Right ventricle myocardium inferior (tissue), 1 donor: ENCODE measurements at regions of chr11 and their contacts with region 1.

Region 1: DNA sequence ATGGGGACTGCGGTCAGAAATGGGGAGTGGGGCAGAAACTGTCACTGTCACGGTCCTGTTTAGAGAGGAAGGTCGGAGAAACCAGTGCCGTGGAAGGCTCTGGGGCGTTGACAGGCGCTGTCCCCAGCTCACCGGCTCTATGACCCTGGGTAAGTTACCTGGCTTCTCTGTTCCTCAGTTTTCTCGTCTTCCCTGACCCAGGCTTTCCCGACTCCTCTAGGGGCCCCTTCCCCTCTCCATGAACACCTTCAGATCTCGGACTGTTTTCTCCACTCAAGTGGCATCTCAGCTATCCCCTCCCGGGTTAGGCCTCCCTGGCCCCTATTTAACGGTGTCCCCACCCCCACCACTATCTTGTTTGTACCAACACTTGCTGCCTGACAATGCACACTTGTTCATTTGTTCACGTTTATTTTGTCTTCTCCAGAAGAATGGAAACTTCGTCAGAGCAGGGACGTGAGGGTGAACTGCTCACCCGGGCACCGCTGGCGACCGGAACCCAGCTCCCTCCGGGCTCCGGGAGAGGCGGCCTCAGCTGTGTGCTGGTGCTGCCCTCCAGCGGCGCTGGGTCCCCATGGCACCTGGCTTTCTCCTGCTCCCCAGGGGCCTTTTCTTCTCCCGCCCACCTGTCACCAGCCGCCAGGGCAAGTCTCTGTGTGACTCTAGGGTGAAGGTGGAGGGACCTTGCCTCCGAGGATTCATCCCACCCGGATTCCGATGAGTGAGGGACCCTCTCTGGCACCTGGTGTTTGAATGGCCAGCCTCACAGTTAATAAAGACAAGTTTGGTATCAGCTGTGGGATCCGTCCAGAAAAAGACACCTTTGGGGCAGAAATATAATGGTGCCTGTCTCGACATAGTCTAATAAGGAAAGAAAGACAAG is 33.1 kb upstream of the SLC35C1 start:
- DNase-seq: peak; percentile 91
- ATAC-seq: peak; percentile 96

Region 2: GRCh38 chr11:45110562-45110961 is 661.2 kb before region 1 on chr11:
- intact Hi-C with region 1: loop called (anchors 10 kb)
- DNase-seq: no peak
- ATAC-seq: peak; percentile 58

Region 3: GRCh38 chr11:45371251-45372115 is 400.3 kb before region 1 on chr11:
- intact Hi-C with region 1: loop called (anchors 1 kb)
- DNase-seq: no peak
- ATAC-seq: no peak

Region 4: GRCh38 chr11:45538363-45538762 is 233.4 kb before region 1 on chr11:
- intact Hi-C with region 1: loop called (anchors 5 kb)
- DNase-seq: no peak
- ATAC-seq: peak; percentile 88

Region 5: DNA sequence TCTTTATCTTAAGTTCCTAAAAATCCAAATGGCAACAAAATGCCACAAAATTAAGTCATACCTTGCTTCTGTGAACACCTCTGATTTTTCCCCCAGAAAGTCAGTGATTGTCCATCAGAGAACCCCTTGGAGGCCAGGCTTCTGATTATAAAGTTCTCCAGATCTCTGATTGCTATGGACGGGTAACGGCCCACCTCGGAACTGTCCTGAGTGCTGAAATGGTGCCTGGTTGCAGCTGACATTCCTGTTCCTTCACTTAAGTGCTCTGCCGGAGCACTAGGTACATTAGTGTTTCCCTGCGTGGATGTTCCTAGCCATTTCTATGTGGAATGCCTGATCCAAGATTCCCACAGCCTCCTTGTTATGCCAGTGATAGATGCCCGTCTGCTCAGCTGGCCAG is 191.4 kb before region 1 on chr11:
- intact Hi-C with region 1: no loop called
- DNase-seq: no peak
- ATAC-seq: no peak

Region 6: DNA sequence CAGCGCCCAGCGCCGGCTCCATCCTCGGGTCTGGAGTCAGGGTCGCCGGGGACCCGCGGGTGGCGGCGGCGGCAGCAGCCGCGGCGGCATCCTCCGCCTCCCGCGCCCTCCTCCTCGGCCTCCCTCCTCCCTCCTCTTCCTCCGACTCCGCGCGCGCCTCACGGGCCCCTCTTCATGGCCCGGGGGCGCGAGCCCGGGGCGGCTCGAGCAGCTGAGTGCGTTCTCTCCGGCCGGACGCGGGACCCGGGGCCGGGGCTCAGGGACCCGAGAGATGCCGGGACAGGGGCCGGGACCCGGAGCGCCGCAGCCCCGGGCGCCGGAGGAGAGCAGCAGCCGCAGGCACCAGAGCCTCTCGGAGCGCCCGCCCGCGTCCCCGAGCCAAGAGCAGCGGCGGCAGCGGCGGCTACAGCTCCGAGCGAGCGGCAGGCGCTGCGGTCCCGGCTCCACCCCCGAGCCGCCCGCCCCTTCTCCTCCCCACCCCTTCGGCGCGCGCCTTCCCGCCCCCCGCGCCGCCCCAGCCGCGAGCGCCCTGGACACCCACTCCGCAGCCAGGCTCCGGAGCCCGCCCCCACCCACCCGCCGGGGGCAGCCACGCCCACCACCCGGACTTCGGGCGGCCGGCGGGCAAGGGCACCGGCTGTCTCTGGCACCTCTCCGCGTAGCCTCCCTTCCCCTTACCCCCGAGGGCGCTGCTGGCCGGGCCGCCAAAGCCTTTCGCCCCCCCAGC is 106.4 kb before region 1 on chr11 and contains the start of gene CHST1:
- intact Hi-C with region 1: loop called (anchors 2 kb)
- DNase-seq: peak; percentile 76
- ATAC-seq: peak; percentile 86
- total RNA-seq, gene CHST1: 3.2 TPM